ENCODE measurements at regions of chr1 and their contacts with region 1.

Region 1: DNA sequence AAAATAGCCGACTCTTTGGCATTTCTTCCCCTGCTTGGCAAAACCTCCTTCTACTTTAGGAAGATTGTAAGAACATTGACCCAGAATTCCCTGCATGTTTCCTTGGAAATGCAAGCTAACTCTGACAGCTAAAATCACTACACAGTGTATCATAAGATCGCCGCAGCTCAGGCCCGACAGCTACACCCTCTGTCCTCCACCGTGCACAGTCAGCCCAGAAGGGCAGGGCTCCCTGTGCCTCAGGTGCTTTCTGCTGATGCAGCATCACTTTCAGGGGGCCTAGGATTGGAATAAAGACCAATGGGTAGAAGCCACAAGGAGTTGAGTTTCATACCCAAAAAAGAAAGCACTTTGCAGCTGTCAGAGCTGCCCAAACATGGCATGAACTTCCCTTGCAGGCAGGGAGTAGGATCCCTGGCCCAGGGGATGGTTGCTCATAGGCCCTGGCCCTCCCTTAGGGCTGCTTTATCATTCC is 145.3 kb downstream of the SEC16B start:
- DNase-seq: no peak
- ATAC-seq: peak; percentile 65
- H3K4me3 ChIP-seq: no peak overlapping the region
- H3K27ac ChIP-seq: no peak overlapping the region
- H3K4me1 ChIP-seq: no peaks in the 10 kb centered on the region
- H3K27me3 ChIP-seq: no peaks in the 10 kb centered on the region
- CTCF ChIP-seq: no peak
- EP300 ChIP-seq: no peak
- POLR2A ChIP-seq: no peak
- RAD21 ChIP-seq: no peak

Region 2: GRCh38 chr1:177741476-177741875 is 83.1 kb before region 1 on chr1:
- CTCF ChIA-PET with region 1: no interaction called
- POLR2A ChIA-PET with region 1: no interaction called
- RAD21 ChIA-PET with region 1: no interaction called
- SMC1A ChIA-PET with region 1: no interaction called
- in situ Hi-C with region 1: no loop called
- intact Hi-C with region 1: no loop called
- DNase-seq: no peak
- ATAC-seq: no peak
- H3K4me3 ChIP-seq: no peak overlapping the region
- H3K27ac ChIP-seq: no peak overlapping the region
- H3K4me1 ChIP-seq: no peaks in the 10 kb centered on the region
- H3K27me3 ChIP-seq: no peaks in the 10 kb centered on the region
- CTCF ChIP-seq: no peak
- EP300 ChIP-seq: no peak
- POLR2A ChIP-seq: no peak
- RAD21 ChIP-seq: no peak

Region 3: GRCh38 chr1:177809819-177810218 is 14.7 kb before region 1 on chr1:
- CTCF ChIA-PET with region 1: interaction called, 4 read pairs
- POLR2A ChIA-PET with region 1: interaction called, 13 read pairs
- RAD21 ChIA-PET with region 1: interaction called, 4 read pairs
- SMC1A ChIA-PET with region 1: interaction called, 23 read pairs
- in situ Hi-C with region 1: no loop called
- intact Hi-C with region 1: no loop called
- DNase-seq: peak; percentile 38
- ATAC-seq: peak; percentile 94
- H3K4me3 ChIP-seq: no peak overlapping the region
- H3K27ac ChIP-seq: no peak overlapping the region
- H3K4me1 ChIP-seq: no peaks in the 10 kb centered on the region
- H3K27me3 ChIP-seq: no peaks in the 10 kb centered on the region
- CTCF ChIP-seq: no peak
- EP300 ChIP-seq: no peak
- POLR2A ChIP-seq: no peak
- RAD21 ChIP-seq: no peak

Measured in GM12878 (cell line).